ENCODE measurements at regions of chr21 and their contacts with region 1.

Region 1: DNA sequence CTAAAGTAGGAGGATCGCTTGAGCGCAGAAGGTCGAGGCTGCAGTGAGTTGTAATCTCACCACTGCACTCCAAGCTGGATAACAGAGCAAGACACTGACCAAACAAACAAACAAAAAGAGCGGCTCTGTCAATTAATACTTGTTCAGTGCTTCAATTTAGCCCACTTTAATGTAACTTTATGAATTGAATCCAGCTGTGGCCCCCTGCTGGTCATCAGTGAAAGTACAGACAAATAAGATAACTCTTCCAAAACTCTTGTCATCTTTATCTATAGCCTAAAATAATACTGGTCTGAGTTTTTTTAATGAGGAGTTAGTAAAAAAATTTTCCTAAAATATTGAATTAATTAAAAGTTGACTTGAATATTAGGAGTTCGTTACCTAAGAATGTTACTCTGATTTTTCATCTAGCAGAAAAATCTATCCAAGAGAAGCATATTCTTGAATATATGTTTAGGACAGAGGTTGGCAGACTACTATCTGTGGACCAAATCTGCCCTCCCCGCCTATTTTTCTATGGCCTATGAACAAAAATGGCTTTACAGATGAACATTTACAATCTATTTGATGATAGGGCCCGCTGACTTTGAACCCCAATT is 26.1 kb downstream of the ATP5PF start:
- DNase-seq: peak; percentile 64
- H3K4me3 ChIP-seq: no peak overlapping the region
- H3K27ac ChIP-seq: no peak overlapping the region
- H3K4me1 ChIP-seq: no peaks in the 10 kb centered on the region
- H3K27me3 ChIP-seq: no peaks in the 10 kb centered on the region
- CTCF ChIP-seq: peak; percentile 69 to 92 (median 85)
- POLR2A ChIP-seq: no peak

Region 2: GRCh38 chr21:25421327-25422028 is 287.1 kb before region 1 on chr21:
- intact Hi-C with region 1: no loop called
- DNase-seq: peak; percentile 49
- H3K4me3 ChIP-seq: no peak overlapping the region
- H3K27ac ChIP-seq: no peak overlapping the region
- H3K4me1 ChIP-seq: peaks cover 2% of the 10 kb centered on the region
- H3K27me3 ChIP-seq: no peaks in the 10 kb centered on the region
- CTCF ChIP-seq: peak in 2 of 3 experiments; percentile 12 to 17
- POLR2A ChIP-seq: no peak

Region 3: DNA sequence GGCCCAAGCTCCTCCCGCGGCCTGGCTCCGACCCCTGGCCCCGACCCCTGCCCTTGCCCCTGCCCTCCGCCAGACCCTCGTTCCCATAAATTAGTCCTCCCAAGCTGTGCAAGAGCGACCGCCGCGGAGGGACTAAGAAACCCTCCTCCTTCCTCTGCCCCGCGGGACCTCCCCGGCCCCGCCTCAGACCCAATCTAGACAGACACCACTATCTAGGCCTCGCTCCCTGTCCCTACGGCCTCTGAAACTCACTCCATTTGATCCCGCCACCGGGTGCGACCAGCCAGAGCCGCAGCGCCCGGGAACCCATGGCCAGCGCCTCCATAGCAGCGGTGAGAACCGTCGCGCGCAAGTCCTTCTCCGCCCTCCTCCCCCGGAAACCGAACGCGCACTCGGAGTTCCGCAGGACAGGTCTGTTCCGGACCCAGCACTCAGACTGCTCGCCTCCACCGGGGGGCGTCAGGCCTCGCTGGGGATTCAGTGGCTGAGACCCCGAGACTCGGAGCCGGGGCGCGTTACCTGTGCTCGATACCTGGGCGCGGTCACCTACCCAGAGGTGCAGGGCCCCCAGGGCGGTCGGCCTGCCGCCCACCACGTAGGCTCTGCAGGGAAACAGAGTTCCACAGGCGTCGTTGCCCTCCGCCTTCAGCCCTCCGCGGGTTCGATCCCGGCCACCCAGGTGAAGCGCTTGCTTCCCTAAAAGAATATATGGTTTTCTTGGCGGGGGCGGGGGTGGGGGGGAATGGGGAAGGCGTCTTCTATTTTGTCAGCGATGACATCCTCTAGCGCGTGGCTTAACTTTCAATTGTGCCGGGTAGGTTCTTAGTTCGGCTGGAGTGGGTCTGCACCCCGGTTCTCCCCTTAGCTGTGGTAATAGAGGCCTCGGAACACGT is 101.2 kb before region 1 on chr21 and contains the start of gene MRPL39:
- intact Hi-C with region 1: loop called (anchors 10 kb)
- DNase-seq: peak; percentile 88
- H3K4me3 ChIP-seq: peak within 1 kb of the TSS; percentile 98
- H3K27ac ChIP-seq: peak within 1 kb of the TSS; percentile 88 to 90
- H3K4me1 ChIP-seq: peaks cover 17% of the 10 kb centered on the region
- H3K27me3 ChIP-seq: no peaks in the 10 kb centered on the region
- CTCF ChIP-seq: peak; percentile 38 to 70 (median 64)
- POLR2A ChIP-seq: no peak
- total RNA-seq, gene MRPL39: 35.5 to 48.8 TPM